Activated B cell treated with CpG ODN at 0.5 μM for 24 hours (primary cell): ENCODE measurements at regions of chr4 and their contacts with region 1.

Region 1: DNA sequence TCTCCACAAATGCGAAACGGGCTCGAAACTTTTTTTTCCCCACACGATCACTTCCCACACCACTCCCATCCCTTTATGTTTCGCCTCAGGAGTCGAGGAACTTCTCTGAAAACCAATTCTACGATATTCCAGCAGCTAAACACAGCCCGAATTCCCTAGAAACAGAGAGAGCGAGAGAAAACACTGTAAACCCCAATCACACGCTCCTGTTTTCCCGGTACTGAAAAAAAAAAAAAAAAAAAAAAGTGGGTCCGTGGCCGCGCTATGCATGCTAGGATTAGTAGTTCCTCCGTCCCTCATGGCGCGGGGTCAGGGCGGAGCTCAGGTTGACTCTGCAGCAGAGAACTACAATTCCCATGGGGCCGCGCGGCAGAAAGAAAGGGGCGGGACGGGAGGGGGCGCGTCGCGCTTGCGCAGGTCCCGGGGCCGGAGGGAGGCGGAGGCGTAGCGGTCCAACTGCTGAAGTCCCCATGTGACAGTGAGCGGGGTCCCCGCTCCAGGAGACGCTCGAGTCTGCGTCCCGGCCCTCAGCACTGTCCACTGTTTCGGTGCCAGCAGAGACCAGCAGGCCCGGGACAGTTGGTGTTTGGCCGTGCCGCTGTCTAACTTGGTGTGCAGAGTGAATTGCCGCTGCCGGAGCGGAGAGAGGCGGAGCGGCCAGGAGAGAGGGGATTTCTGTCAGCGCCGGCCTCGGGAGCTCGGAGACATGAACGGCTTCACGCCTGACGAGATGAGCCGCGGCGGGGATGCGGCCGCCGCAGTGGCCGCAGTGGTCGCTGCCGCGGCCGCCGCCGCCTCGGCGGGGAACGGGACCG is at the start of gene SAP30:
- DNase-seq: peak; percentile 84
- ATAC-seq: peak; percentile 86
- H3K4me3 Mint-ChIP-seq: peak within 1 kb of the TSS; percentile 100
- H3K27ac Mint-ChIP-seq: peak within 1 kb of the TSS; percentile 96
- H3K4me1 Mint-ChIP-seq: peaks cover 16% of the 10 kb centered on the region
- H3K27me3 Mint-ChIP-seq: no peaks in the 10 kb centered on the region
- CTCF ChIP-seq: no peak
- total RNA-seq, gene SAP30: 2.1 TPM in 2 replicates

Region 2: DNA sequence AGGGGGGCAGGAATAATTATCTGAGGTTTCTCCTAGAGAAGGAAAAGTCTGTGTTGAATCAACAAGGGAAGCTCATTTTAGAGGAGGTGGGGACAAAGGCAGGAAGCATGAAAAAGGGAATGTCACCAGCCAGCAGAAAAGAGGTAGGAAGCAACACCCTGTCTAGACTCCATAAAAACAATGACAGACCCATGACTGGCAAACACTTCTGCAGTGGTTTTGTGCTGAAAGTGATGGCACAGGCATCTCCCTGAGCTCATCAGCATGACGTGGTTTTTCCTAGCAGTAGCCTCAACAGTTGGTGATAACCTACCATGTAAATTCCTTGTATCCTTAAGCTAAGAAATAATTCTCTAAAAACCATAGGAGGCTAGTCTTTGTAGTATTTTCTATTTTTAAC is 312.8 kb before region 1 on chr4:
- CTCF ChIA-PET with region 1: no interaction called
- POLR2A ChIA-PET with region 1: interaction called, 12 read pairs
- intact Hi-C with region 1: no loop called
- DNase-seq: no peak
- ATAC-seq: no peak
- H3K4me3 Mint-ChIP-seq: no peak overlapping the region
- H3K27ac Mint-ChIP-seq: no peak overlapping the region
- H3K4me1 Mint-ChIP-seq: no peaks in the 10 kb centered on the region
- H3K27me3 Mint-ChIP-seq: peaks cover 2% of the 10 kb centered on the region
- CTCF ChIP-seq: no peak

Region 3: DNA sequence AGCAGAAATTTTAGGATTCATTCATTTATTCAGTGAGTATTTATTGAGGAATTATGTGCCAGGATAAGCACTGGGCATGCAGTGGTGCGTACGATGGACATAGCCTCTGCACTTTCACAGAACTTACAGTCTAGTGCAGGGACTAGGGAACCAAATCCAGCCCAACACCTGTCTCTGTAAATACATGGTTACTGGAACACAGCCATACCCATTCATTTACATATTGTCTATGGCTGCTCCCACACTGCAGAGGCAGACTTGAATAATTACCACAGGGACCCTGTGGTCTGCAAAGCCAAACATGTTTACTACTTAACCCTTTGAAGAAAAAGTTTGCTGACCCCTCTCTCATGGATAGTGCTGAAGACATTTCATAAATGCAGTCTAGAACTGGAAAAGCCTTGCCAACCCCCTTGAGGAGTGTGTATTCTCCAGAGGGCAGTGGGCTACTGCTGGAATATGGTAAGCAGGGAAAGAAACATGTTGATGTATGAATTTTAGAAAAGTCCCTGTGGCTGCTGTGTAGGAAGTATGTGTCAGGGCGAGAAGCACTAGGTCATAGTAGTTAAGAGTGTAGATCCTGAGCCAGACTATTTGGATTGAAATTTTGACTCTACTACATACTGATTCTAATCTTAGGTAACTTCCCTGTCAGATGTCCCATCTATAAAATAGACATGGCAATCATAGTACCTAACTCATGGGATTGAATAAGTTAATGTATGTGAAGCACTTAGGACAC is 126.6 kb before region 1 on chr4:
- CTCF ChIA-PET with region 1: no interaction called
- POLR2A ChIA-PET with region 1: interaction called, 14 read pairs
- intact Hi-C with region 1: no loop called
- DNase-seq: no peak
- ATAC-seq: no peak
- H3K4me3 Mint-ChIP-seq: no peak overlapping the region
- H3K27ac Mint-ChIP-seq: no peak overlapping the region
- H3K4me1 Mint-ChIP-seq: peaks cover 54% of the 10 kb centered on the region
- H3K27me3 Mint-ChIP-seq: no peaks in the 10 kb centered on the region
- CTCF ChIP-seq: no peak

Region 4: GRCh38 chr4:173334085-173334772 is 36.5 kb before region 1 on chr4 and contains the start of gene HMGB2:
- CTCF ChIA-PET with region 1: no interaction called
- POLR2A ChIA-PET with region 1: interaction called, 270 read pairs
- intact Hi-C with region 1: loop called (anchors 1 kb)
- DNase-seq: peak; percentile 95
- ATAC-seq: peak; percentile 93
- H3K4me3 Mint-ChIP-seq: peak within 1 kb of the TSS; percentile 96
- H3K27ac Mint-ChIP-seq: peak within 1 kb of the TSS; percentile 98
- H3K4me1 Mint-ChIP-seq: peaks cover 25% of the 10 kb centered on the region
- H3K27me3 Mint-ChIP-seq: no peaks in the 10 kb centered on the region
- CTCF ChIP-seq: no peak
- total RNA-seq, gene HMGB2: 63.2 and 63.9 TPM in 2 replicates

Region 5: DNA sequence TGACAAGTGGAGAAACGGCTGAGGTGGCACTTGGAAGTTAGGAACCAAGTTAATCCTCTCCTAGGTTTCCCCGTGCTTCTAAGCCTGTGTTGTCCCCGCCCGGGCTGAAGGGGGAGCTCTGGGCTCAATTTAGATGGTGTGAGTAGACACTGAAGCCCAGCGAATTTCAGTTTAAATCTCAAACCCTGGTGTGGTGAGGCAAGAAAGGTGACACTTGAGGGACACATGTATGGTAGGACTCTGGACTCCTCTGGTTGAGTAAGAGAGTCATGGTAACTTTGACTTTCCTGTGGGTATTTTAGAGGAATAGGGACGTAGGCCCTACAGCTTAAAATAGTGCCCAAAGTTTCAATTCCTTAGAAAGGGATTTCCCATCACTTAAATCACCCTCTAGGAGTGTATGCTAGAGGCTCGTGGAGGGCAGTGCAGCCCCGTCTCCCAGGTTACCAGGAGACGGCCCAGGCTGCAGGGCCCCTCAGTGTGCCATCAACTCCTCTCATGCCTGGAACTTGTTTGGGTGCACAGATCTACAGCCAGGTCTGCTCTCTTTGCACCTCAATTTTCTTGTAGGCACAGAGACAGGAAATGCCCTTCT is 135.3 kb after region 1 on chr4:
- CTCF ChIA-PET with region 1: no interaction called
- POLR2A ChIA-PET with region 1: no interaction called
- intact Hi-C with region 1: loop called (anchors 5 kb)
- DNase-seq: no peak
- ATAC-seq: peak; percentile 53
- H3K4me3 Mint-ChIP-seq: peak overlapping the region; percentile 70
- H3K27ac Mint-ChIP-seq: no peak overlapping the region
- H3K4me1 Mint-ChIP-seq: peaks cover 48% of the 10 kb centered on the region
- H3K27me3 Mint-ChIP-seq: peaks cover 76% of the 10 kb centered on the region
- CTCF ChIP-seq: no peak

Region 6: DNA sequence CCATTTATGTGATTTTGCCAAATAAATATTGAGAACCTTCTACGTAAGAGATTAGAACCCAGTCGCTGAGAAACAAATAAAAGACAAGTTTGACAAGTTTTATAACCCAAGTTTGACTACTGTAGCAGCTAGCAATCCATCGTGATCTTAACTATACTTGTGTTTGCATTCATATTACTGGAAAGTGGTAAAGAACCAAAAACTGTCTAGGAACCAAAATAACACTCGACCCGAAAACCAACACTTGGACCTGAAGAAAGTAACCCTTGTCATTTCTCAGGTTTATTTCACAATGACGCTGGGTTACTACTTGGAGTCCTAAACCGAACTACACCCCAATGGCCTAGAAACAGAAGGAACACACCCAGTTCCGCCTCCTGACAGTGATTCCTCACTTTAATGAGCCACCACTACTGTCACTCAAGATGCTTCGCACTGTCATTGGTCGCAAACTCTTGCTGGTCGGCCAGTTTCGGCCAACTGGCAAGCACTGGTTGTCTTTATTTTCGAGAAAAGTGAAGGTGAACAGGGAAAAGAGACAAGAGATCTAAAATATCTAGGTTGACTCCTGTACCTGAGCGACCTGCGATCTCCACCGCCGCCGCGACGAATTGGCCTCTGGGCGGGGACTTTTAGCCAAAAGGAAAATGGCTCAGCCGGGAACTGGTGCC is 912.3 kb after region 1 on chr4:
- CTCF ChIA-PET with region 1: no interaction called
- POLR2A ChIA-PET with region 1: interaction called, 4 read pairs
- intact Hi-C with region 1: loop called (anchors 1 kb)
- DNase-seq: peak; percentile 54
- ATAC-seq: peak; percentile 96
- H3K4me3 Mint-ChIP-seq: peak overlapping the region; percentile 99
- H3K27ac Mint-ChIP-seq: peak overlapping the region; percentile 99
- H3K4me1 Mint-ChIP-seq: peaks cover 58% of the 10 kb centered on the region
- H3K27me3 Mint-ChIP-seq: no peaks in the 10 kb centered on the region
- CTCF ChIP-seq: no peak